T-cell (primary cell): ENCODE measurements at regions of chr17 and their contacts with region 1.

Region 1: DNA sequence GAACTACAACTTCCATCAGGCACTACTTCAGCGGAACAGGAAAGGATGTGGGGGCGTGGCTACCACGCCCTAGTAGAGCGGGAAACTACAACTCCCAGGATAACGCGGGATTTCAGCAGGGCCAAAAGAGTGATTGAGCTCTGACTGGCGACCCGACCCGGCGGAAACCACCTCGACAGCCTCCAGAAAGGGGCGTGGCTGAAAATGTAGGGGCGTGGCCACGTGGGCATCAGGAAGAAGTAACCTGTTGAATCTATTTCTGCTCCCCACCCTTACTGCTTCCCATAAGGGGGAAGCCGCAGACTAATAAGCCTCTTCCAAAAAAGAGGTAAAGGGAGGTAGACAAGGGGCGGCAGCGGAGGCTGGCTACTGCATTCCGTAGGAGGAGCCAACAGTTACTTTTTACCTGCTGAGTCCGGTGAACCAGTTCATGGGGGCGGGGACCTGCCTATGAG is at the start of gene TMEM102:
- DNase-seq: peak; percentile 95 to 99 (median 97)
- ATAC-seq: peak; percentile 82 to 87 (median 84)
- H3K4me3 ChIP-seq: peak within 1 kb of the TSS; percentile 78 to 86
- H3K4me3 Mint-ChIP-seq: peak within 1 kb of the TSS; percentile 92 to 96 (median 93)
- H3K27ac ChIP-seq: peak within 1 kb of the TSS; percentile 83
- H3K27ac Mint-ChIP-seq: peak within 1 kb of the TSS; percentile 95 to 96
- H3K4me1 ChIP-seq: peaks cover 13 to 51% of the 10 kb centered on the region in 2 experiments
- H3K4me1 Mint-ChIP-seq: peaks cover 35 to 43% (median 37%) of the 10 kb centered on the region in 3 donors
- H3K27me3 ChIP-seq: peaks cover 0 to 28% of the 10 kb centered on the region in 2 experiments
- H3K27me3 Mint-ChIP-seq: peaks cover 11 to 13% of the 10 kb centered on the region in 2 donors
- total RNA-seq, gene TMEM102: 8.8 to 26.9 (median 23.5) TPM

Region 2: GRCh38 chr17:7403977-7404736 is 31.1 kb before region 1 on chr17 and contains the start of gene TMEM256:
- CTCF ChIA-PET with region 1: interaction called in 1 of 2 experiments, 21 read pairs
- POLR2A ChIA-PET with region 1: interaction called in 1 of 2 experiments, 6 read pairs
- DNase-seq: peak; percentile 87 to 98 (median 94)
- ATAC-seq: peak; percentile 86 to 91 (median 90)
- H3K4me3 ChIP-seq: peak within 1 kb of the TSS; percentile 92 to 93
- H3K4me3 Mint-ChIP-seq: peak within 1 kb of the TSS; percentile 90 to 95 (median 94)
- H3K27ac ChIP-seq: peak within 1 kb of the TSS; percentile 84
- H3K27ac Mint-ChIP-seq: peak within 1 kb of the TSS; percentile 87 to 96
- H3K4me1 ChIP-seq: peaks cover 2 to 32% of the 10 kb centered on the region in 2 experiments
- H3K4me1 Mint-ChIP-seq: peaks cover 13 to 24% (median 15%) of the 10 kb centered on the region in 3 donors
- H3K27me3 ChIP-seq: peaks cover 0 to 8% of the 10 kb centered on the region in 2 experiments
- H3K27me3 Mint-ChIP-seq: peaks cover 0 to 1% of the 10 kb centered on the region in 2 donors
- total RNA-seq, gene TMEM256: 28.7 to 48.9 (median 45.6) TPM

Region 3: DNA sequence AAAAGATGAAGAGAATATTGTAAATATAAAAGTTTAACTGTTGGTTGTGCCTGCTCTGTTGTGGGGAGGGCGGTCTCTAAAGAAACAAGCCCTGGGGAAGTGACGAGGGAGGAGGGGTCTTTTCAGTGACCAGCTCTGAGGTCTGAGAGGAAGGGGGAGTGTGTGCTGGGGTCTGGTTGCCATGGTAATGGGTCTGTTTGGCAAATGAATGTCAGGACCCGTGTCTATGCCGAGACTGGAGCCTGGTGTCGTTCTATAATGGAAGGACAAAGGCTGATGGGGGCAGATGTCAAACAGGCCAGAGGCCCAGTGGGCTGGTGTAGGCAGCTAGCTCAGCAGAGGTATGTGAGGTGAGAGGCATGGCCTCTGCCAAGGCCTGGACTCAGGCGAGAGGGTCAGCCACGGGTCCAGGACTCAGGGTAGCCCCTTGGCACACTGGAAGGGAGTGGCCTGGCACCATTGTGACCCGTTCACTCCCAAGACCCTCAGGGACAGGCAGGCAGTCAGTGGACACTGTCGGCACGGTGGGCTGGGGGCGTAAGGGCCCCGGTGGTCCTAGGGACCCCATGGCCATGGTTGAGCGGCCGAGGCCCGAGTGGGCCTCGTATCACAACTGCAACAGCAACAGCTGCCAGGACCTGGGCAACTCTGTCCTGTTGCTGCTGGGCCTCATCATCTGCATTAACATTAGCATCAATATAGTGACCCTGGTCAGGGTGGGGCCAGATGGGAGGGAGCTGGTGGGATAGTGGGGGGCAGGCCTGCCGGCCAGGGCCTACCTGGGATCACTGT is 15.2 kb before region 1 on chr17 and contains the start of gene SPEM1:
- CTCF ChIA-PET with region 1: no interaction called
- POLR2A ChIA-PET with region 1: no interaction called
- DNase-seq: no peak
- ATAC-seq: no peak
- H3K4me3 ChIP-seq: no peak within 1 kb of the TSS
- H3K4me3 Mint-ChIP-seq: no peak within 1 kb of the TSS
- H3K27ac ChIP-seq: no peak within 1 kb of the TSS
- H3K27ac Mint-ChIP-seq: no peak within 1 kb of the TSS
- H3K4me1 ChIP-seq: no peaks in the 10 kb centered on the region
- H3K4me1 Mint-ChIP-seq: no peaks in the 10 kb centered on the region
- H3K27me3 ChIP-seq: peaks cover 0 to 21% of the 10 kb centered on the region in 2 experiments
- H3K27me3 Mint-ChIP-seq: peaks cover 0 to 4% of the 10 kb centered on the region in 2 donors
- total RNA-seq, gene SPEM1: not detected

Region 4: DNA sequence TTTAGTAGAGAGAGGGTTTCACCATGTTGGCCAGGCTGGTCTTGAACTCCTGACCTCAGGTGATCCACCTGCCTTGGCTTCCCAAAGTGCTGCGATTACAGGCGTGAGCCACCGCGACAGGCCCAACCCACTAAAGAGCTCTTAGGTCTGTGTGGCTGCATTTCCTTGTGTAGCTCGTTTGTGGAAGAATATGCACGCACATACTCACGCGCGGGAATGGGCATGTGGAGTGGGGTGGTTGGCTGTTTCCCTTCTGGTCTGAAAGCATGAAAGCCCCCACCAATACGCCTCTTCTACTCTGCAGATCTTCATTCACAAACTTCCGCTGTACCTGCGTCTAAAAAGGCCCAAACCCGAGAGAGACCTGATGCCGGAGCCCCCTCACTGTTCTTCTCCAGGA is 19.7 kb after region 1 on chr17:
- CTCF ChIA-PET with region 1: interaction called, 6 to 17 read pairs
- POLR2A ChIA-PET with region 1: interaction called, 6 to 7 read pairs
- DNase-seq: peak in 1 of 35 experiments; percentile 49
- ATAC-seq: peak in 2 of 4 experiments; percentile 36 to 44
- H3K4me3 ChIP-seq: peak overlapping the region; percentile 95 to 99
- H3K4me3 Mint-ChIP-seq: peak overlapping the region; percentile 90 to 97 (median 94)
- H3K27ac ChIP-seq: peak overlapping the region; percentile 74
- H3K27ac Mint-ChIP-seq: peak overlapping the region; percentile 90 to 97
- H3K4me1 ChIP-seq: peaks cover 0 to 21% of the 10 kb centered on the region in 2 experiments
- H3K4me1 Mint-ChIP-seq: peaks cover 22 to 30% (median 26%) of the 10 kb centered on the region in 3 donors
- H3K27me3 ChIP-seq: no peaks in the 10 kb centered on the region
- H3K27me3 Mint-ChIP-seq: no peaks in the 10 kb centered on the region

Region 5: GRCh38 chr17:7484067-7484918 is 49.0 kb after region 1 on chr17 and contains the start of gene POLR2A:
- CTCF ChIA-PET with region 1: interaction called, 6 to 8 read pairs
- POLR2A ChIA-PET with region 1: interaction called in 1 of 2 experiments, 21 read pairs
- DNase-seq: peak; percentile 94 to 100 (median 97)
- ATAC-seq: peak; percentile 66 to 73 (median 70)
- H3K4me3 ChIP-seq: peak within 1 kb of the TSS; percentile 92 to 98
- H3K4me3 Mint-ChIP-seq: peak within 1 kb of the TSS; percentile 92 to 99 (median 98)
- H3K27ac ChIP-seq: peak within 1 kb of the TSS; percentile 99
- H3K27ac Mint-ChIP-seq: peak within 1 kb of the TSS; percentile 100
- H3K4me1 ChIP-seq: peaks cover 34 to 72% of the 10 kb centered on the region in 2 experiments
- H3K4me1 Mint-ChIP-seq: peaks cover 75 to 81% (median 77%) of the 10 kb centered on the region in 3 donors
- H3K27me3 ChIP-seq: no peaks in the 10 kb centered on the region
- H3K27me3 Mint-ChIP-seq: no peaks in the 10 kb centered on the region
- total RNA-seq, gene POLR2A: 198 to 444 (median 212) TPM